ENCODE measurements at regions of chr2 and their contacts with region 1.

Region 1: GRCh38 chr2:178279142-178279541 is 84.8 kb downstream of the OSBPL6 start:
- DNase-seq: no peak
- H3K4me3 ChIP-seq: no peak overlapping the region
- H3K27ac ChIP-seq: no peak overlapping the region
- H3K4me1 ChIP-seq: peaks cover 0 to 6% (median 0%) of the 10 kb centered on the region in 4 donors
- H3K27me3 ChIP-seq: no peaks in the 10 kb centered on the region
- CTCF ChIP-seq: no peak
- EP300 ChIP-seq: no peak
- POLR2A ChIP-seq: no peak

Region 2: GRCh38 chr2:177174486-177174885 is 1104.7 kb before region 1 on chr2:
- intact Hi-C with region 1: no loop called
- DNase-seq: no peak
- H3K4me3 ChIP-seq: no peak overlapping the region
- H3K27ac ChIP-seq: no peak overlapping the region
- H3K4me1 ChIP-seq: no peaks in the 10 kb centered on the region
- H3K27me3 ChIP-seq: no peaks in the 10 kb centered on the region
- CTCF ChIP-seq: no peak
- EP300 ChIP-seq: no peak
- POLR2A ChIP-seq: no peak

Region 3: GRCh38 chr2:177501186-177501585 is 778.0 kb before region 1 on chr2:
- intact Hi-C with region 1: no loop called
- DNase-seq: no peak
- H3K4me3 ChIP-seq: no peak overlapping the region
- H3K27ac ChIP-seq: no peak overlapping the region
- H3K4me1 ChIP-seq: peaks cover 0 to 9% (median 0%) of the 10 kb centered on the region in 4 donors
- H3K27me3 ChIP-seq: no peaks in the 10 kb centered on the region
- CTCF ChIP-seq: no peak
- EP300 ChIP-seq: no peak
- POLR2A ChIP-seq: no peak

Region 4: DNA sequence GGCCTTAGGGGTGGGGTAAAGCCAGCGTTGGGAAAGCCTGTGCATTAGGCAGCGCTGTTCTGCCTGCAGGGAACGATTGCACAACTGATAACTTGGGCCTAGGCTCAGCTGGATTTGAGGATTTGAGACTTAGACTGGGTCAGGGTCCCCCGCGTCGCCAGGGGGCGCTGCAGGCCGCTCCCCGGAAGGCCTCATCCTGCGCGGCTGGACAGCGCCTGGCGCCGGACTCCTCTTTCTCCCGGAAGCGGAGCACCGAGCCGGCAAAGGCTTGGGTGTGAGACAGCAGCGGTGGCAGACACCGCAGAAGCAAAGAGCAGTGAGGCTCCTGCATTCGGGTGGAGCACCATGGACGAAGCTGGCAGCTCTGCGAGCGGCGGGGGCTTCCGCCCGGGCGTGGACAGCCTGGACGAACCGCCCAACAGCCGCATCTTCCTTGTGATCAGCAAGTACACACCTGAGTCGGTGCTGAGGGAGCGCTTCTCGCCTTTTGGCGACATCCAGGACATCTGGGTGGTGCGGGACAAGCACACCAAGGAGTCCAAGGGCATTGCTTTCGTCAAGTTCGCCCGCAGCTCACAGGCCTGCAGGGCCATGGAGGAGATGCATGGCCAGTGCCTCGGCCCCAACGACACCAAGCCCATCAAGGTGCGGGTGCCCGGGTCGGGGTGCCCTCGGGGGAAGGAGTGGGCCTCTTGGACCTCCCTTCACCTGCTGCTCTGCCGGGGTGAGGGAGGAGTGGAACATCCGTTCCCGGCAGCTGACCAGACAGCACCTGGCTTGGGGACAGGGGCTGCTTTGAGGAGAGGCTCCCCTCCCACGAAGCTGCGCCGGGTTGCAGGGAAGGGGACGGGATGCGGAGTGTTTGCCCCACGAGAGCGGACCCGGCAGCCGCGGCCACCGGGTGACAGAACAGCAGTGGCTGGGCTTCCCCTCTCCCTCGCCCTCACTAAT is 166.7 kb before region 1 on chr2 and contains the start of gene RBM45:
- intact Hi-C with region 1: loop called (anchors 5 kb)
- DNase-seq: peak; percentile 95
- H3K4me3 ChIP-seq: peak within 1 kb of the TSS; percentile 73 to 89 (median 80)
- H3K27ac ChIP-seq: peak within 1 kb of the TSS; percentile 76 to 82 (median 80)
- H3K4me1 ChIP-seq: peaks cover 0 to 16% (median 13%) of the 10 kb centered on the region in 4 donors
- H3K27me3 ChIP-seq: no peaks in the 10 kb centered on the region
- CTCF ChIP-seq: peak; percentile 83 to 92 (median 88)
- EP300 ChIP-seq: no peak
- POLR2A ChIP-seq: peak in 1 of 2 donors; percentile 35
- total RNA-seq, gene RBM45: 11.0 to 16.3 (median 14.0) TPM

Region 5: GRCh38 chr2:178128836-178129630 is 150.1 kb before region 1 on chr2:
- intact Hi-C with region 1: loop called (anchors 2 kb)
- DNase-seq: no peak
- H3K4me3 ChIP-seq: no peak overlapping the region
- H3K27ac ChIP-seq: no peak overlapping the region
- H3K4me1 ChIP-seq: no peaks in the 10 kb centered on the region
- H3K27me3 ChIP-seq: no peaks in the 10 kb centered on the region
- CTCF ChIP-seq: no peak
- EP300 ChIP-seq: no peak
- POLR2A ChIP-seq: no peak

Region 6: GRCh38 chr2:178241844-178242551 is 37.1 kb before region 1 on chr2:
- intact Hi-C with region 1: no loop called
- DNase-seq: peak; percentile 80
- H3K4me3 ChIP-seq: no peak overlapping the region
- H3K27ac ChIP-seq: peak overlapping the region in 3 of 4 donors; percentile 0 to 41 (median 36)
- H3K4me1 ChIP-seq: peaks cover 0 to 13% (median 6%) of the 10 kb centered on the region in 4 donors
- H3K27me3 ChIP-seq: no peaks in the 10 kb centered on the region
- CTCF ChIP-seq: no peak
- EP300 ChIP-seq: no peak
- POLR2A ChIP-seq: no peak

Measured in sigmoid colon (tissue), 7 donors.